Mammary epithelial cell (primary cell): ENCODE measurements at regions of chr13 and their contacts with region 1.

Region 1: GRCh38 chr13:40549500-40550094 is 116.8 kb downstream of the FOXO1 start:
- DNase-seq: no peak
- H3K4me3 ChIP-seq: no peak overlapping the region
- H3K27ac ChIP-seq: no peak overlapping the region
- H3K4me1 ChIP-seq: no peaks in the 10 kb centered on the region
- H3K27me3 ChIP-seq: no peaks in the 10 kb centered on the region
- CTCF ChIP-seq: no peak

Region 2: GRCh38 chr13:40477623-40478608 is 71.7 kb before region 1 on chr13:
- CTCF ChIA-PET with region 1: no interaction called
- dilution Hi-C with region 1: no loop called
- in situ Hi-C with region 1: no loop called
- intact Hi-C with region 1: no loop called
- DNase-seq: no peak
- H3K4me3 ChIP-seq: no peak overlapping the region
- H3K27ac ChIP-seq: no peak overlapping the region
- H3K4me1 ChIP-seq: no peaks in the 10 kb centered on the region
- H3K27me3 ChIP-seq: no peaks in the 10 kb centered on the region
- CTCF ChIP-seq: no peak

Region 3: DNA sequence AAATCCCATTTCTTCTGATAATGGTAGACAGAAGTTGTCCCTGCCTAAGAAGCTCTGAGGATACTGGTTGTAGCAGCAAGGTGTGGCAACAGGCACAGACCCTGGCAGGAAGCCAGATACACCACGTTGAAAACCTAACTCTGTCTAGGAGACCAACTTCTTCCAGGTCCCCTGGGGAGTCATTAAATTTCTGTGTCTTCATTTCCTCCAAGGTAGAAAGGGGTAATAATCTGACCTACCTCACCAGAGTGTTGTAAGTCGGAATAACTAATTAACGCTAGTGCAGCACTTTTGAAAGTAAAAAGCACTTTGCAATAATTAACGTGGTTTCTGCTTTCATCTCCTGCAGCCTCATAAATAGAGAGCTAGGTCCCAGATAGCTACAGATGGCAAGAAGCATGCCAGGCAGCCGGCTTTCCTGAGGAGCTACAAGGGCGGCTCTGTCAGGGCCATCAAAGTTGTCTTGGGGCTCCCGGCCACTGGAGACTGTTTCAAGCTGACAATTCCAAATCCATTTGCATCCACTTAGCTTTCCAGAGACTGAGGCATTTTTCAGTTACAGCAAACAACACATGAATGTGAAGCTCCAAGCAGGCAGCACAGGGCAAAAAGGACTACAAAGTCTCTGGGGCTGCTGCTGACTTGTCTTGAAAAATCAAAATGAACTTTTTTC is 59.4 kb before region 1 on chr13:
- CTCF ChIA-PET with region 1: no interaction called
- dilution Hi-C with region 1: loop called (anchors 10 kb)
- in situ Hi-C with region 1: no loop called
- intact Hi-C with region 1: no loop called
- DNase-seq: no peak
- H3K4me3 ChIP-seq: no peak overlapping the region
- H3K27ac ChIP-seq: no peak overlapping the region
- H3K4me1 ChIP-seq: peaks cover 2% of the 10 kb centered on the region
- H3K27me3 ChIP-seq: no peaks in the 10 kb centered on the region
- CTCF ChIP-seq: no peak

Region 4: DNA sequence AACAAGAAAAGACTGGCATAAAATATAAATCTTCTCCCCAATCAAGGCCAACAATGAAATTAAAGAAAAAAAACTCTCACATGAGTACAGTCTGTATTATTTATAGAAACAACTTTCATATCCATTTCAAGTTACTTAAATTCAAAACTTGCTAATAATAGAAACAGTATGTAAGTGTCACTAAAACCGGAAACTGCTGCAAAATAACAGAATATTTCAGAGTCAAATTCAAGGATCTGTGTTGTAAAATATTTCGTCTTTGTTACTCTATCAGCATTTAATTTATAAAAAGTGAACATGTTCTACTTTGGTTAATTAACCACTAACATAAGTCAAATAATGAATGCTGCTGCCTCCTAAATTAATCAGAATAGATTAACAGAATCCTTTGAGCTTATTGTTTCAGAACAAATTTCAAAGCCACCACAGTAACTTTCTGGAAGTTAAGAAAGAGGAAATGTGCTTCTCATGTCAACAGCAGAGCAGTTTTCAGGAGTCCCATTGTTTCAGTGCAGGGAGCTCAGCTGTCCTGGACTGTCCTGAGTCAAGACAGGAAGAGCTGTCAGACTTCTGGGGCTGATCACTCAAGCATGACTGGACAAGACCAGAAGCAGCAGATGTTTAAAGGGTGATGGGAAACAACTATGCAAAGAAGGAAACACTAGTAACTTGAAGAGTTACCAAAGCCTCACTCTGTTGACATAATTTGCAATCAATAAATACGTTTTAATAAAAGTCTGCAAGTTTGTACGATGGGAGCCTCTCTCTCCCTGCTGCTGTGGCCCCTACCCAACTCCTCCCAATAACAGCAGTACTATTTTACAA is 39.9 kb after region 1 on chr13:
- CTCF ChIA-PET with region 1: no interaction called
- dilution Hi-C with region 1: no loop called
- in situ Hi-C with region 1: no loop called
- intact Hi-C with region 1: no loop called
- DNase-seq: peak; percentile 89
- H3K4me3 ChIP-seq: no peak overlapping the region
- H3K27ac ChIP-seq: no peak overlapping the region
- H3K4me1 ChIP-seq: peaks cover 37% of the 10 kb centered on the region
- H3K27me3 ChIP-seq: no peaks in the 10 kb centered on the region
- CTCF ChIP-seq: no peak